ENCODE measurements at regions of chr18 and their contacts with region 1.

Region 1: GRCh38 chr18:21571772-21572171 is 28.7 kb downstream of the ESCO1 start:
- DNase-seq: no peak
- H3K4me3 ChIP-seq: no peak overlapping the region
- H3K27ac ChIP-seq: no peak overlapping the region
- H3K4me1 ChIP-seq: no peaks in the 10 kb centered on the region
- H3K27me3 ChIP-seq: no peaks in the 10 kb centered on the region
- CTCF ChIP-seq: no peak
- EP300 ChIP-seq: no peak
- POLR2A ChIP-seq: no peak

Region 2: GRCh38 chr18:21593540-21594257 is 21.9 kb after region 1 on chr18:
- in situ Hi-C with region 1: no loop called
- intact Hi-C with region 1: loop called (anchors 1 kb)
- DNase-seq: no peak
- H3K4me3 ChIP-seq: no peak overlapping the region
- H3K27ac ChIP-seq: no peak overlapping the region
- H3K4me1 ChIP-seq: peaks cover 0 to 20% (median 3%) of the 10 kb centered on the region in 4 donors
- H3K27me3 ChIP-seq: no peaks in the 10 kb centered on the region
- CTCF ChIP-seq: no peak
- EP300 ChIP-seq: no peak
- POLR2A ChIP-seq: no peak

Measured in transverse colon (tissue), 4 donors.